GM12878 (cell line): ENCODE measurements at regions of chr9 and their contacts with region 1.

Region 1: GRCh38 chr9:84703793-84704192 is 34.3 kb downstream of the NTRK2 start:
- DNase-seq: no peak
- ATAC-seq: peak; percentile 11
- H3K4me3 ChIP-seq: no peak overlapping the region
- H3K27ac ChIP-seq: no peak overlapping the region
- H3K4me1 ChIP-seq: peaks cover 17% of the 10 kb centered on the region
- H3K27me3 ChIP-seq: no peaks in the 10 kb centered on the region
- CTCF ChIP-seq: no peak
- EP300 ChIP-seq: no peak
- POLR2A ChIP-seq: no peak
- RAD21 ChIP-seq: no peak

Region 2: GRCh38 chr9:84736081-84736480 is 32.3 kb after region 1 on chr9:
- CTCF ChIA-PET with region 1: interaction called, 3 read pairs
- POLR2A ChIA-PET with region 1: interaction called, 11 read pairs
- RAD21 ChIA-PET with region 1: interaction called, 5 read pairs
- SMC1A ChIA-PET with region 1: interaction called, 7 read pairs
- in situ Hi-C with region 1: no loop called
- intact Hi-C with region 1: no loop called
- DNase-seq: no peak
- ATAC-seq: no peak
- H3K4me3 ChIP-seq: no peak overlapping the region
- H3K27ac ChIP-seq: no peak overlapping the region
- H3K4me1 ChIP-seq: no peaks in the 10 kb centered on the region
- H3K27me3 ChIP-seq: no peaks in the 10 kb centered on the region
- CTCF ChIP-seq: no peak
- EP300 ChIP-seq: no peak
- POLR2A ChIP-seq: no peak
- RAD21 ChIP-seq: no peak